Activated naive CD8-positive, alpha-beta T cell treated with anti-CD3 and anti-CD28 coated beads, Interleukin-2, amount 10 ng/mL, durations not matched to agents 7 days and 5 days (primary cell): ENCODE measurements at regions of chr22 and their contacts with region 1.

Region 1: GRCh38 chr22:22838148-22838786 is 49.3 kb upstream of the IGLL5 start:
- DNase-seq: no peak
- ATAC-seq: peak; percentile 61
- H3K4me3 Mint-ChIP-seq: no peak overlapping the region
- H3K27ac Mint-ChIP-seq: peak overlapping the region; percentile 35
- H3K4me1 Mint-ChIP-seq: peaks cover 10% of the 10 kb centered on the region
- H3K27me3 Mint-ChIP-seq: peaks cover 14% of the 10 kb centered on the region

Region 2: GRCh38 chr22:22818861-22819855 is 19.1 kb before region 1 on chr22:
- POLR2A ChIA-PET with region 1: interaction called, 10 read pairs
- DNase-seq: peak; percentile 61
- ATAC-seq: peak; percentile 82
- H3K4me3 Mint-ChIP-seq: peak overlapping the region; percentile 67
- H3K27ac Mint-ChIP-seq: peak overlapping the region; percentile 86
- H3K4me1 Mint-ChIP-seq: peaks cover 77% of the 10 kb centered on the region
- H3K27me3 Mint-ChIP-seq: no peaks in the 10 kb centered on the region

Region 3: DNA sequence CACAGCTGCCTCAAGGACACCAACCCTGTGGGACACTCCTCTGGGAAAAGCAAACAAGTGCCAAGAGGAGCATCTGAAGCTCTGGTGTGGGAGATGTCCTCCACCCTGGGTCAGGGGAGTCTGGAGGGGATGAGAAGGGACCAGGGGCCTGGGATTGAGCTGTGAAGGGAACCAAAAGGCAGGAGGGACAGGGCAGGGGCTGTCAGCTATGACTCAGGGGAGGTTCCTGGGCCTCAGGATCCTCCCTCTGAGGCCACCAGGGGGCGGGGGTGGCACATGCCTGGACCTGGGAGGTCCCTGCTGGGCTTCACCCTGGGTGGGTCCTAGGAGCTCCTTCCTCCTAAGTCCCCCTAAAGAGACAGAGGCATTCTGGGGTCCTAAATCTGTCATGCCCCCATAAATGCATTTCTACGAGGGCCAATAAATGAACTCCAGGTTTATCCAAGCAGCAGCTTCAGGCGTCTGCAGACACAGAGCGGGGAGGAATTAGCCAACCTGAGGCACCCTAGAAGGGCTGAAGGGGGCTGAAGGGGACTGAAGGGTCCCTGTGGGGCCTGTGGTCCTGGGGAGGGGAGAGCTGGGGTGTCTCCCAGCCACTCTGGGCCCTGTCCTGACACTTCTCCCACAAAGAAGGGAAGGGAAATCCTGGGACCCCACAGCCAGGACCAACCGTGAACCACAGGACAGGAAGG is 17.5 kb after region 1 on chr22:
- POLR2A ChIA-PET with region 1: no interaction called
- DNase-seq: peak; percentile 66
- ATAC-seq: peak; percentile 87
- H3K4me3 Mint-ChIP-seq: no peak overlapping the region
- H3K27ac Mint-ChIP-seq: no peak overlapping the region
- H3K4me1 Mint-ChIP-seq: no peaks in the 10 kb centered on the region
- H3K27me3 Mint-ChIP-seq: peaks cover 37% of the 10 kb centered on the region

Region 4: DNA sequence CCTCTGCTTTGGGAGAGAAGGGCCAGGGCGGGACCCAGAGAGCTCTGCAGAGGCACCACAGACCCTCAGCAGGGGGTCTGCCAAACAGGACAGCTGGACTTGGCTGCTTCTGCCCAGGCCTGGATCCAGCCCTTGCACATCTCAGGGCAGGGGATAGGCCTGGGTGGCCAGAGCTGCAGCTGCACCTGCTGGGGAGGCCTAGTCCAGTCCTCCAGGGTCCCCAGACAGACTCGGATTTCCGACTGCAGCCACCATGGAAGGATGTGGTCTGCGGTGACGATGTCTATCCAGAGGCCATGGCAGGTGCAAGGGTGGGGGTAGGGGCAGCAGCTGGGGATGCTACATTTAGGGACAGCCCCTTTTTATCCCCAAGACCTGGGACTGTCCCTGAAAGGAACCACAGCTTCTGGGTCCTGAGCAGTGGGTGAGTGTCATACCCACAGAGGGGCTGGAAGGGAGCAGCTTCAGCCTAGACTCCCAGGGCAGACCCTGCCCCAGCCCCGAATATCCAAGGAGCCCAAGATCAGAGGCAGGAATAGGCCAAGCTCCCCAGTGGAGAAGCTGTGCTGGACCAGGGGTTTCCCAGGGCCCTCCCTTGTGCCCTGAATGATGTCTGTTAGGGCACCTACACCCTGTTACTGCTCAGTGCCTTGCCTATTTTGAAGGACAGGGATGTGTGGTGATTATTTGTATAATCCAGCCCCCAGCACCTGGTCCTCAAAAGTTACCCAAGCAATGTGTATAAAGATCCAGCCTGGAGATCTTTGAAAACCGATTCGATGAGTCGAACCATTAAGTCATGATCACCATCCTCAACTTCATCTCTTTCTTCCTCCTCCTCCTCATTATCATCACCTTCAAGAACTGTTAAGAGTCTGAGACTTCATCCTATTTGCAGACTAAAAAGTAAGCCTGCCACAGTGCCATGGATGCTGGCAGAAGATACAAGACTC is 46.9 kb after region 1 on chr22:
- POLR2A ChIA-PET with region 1: no interaction called
- DNase-seq: peak; percentile 62
- ATAC-seq: peak; percentile 69
- H3K4me3 Mint-ChIP-seq: no peak overlapping the region
- H3K27ac Mint-ChIP-seq: no peak overlapping the region
- H3K4me1 Mint-ChIP-seq: peaks cover 8% of the 10 kb centered on the region
- H3K27me3 Mint-ChIP-seq: peaks cover 28% of the 10 kb centered on the region